Caco-2 (cell line): ENCODE measurements at regions of chr4 and their contacts with region 1.

Region 1: DNA sequence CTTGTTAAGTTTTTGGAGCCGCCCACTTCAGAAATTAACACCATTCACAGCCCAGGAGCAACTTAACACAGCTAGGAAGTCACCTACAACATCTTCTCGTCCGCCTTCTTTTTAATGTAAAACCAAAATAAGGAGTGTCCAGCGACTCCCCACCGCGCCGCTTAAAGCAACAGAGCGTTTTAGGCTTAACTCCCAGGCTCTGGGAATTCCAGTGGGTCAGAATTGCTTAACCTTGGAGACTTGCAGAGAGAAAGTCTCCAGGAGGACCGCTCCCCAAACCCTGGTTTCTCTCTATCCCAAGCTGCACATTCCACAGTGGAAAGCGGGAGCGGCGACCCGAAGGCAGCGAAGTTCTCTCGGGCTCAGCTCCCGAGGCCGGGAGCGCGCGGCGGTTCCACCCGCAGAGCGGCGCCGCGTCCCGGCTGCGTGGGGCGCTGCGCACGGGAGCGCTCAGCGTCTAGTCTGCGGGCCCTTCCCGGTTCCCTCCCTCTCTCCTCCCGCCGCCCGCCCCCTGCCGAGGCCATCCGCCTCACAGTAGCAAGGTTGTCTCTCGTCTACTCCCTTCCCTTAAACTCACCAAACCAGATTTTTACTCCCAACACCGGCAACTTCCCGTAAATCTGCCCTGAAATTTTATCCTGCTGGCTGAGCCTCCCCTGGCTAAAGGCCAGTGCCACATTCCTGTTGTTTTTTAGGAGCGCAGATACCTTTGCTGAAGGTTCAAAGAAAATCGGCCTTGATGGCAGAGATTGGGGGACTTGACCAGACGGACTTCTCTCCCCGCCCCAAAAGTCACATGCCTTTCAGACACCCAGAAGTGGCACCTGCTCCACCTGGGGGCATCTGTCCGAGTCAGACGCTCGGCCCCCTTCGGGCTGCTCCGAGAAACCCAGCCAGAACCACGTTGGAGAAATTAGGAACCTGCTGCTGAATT is at the start of gene RBM47:
- DNase-seq: peak; percentile 81 to 88
- H3K4me3 ChIP-seq: peak within 1 kb of the TSS; percentile 51
- H3K4me3 Mint-ChIP-seq: peak within 1 kb of the TSS; percentile 86
- H3K27ac Mint-ChIP-seq: peak within 1 kb of the TSS; percentile 94
- H3K4me1 ChIP-seq: peaks cover 12% of the 10 kb centered on the region
- H3K4me1 Mint-ChIP-seq: peaks cover 25% of the 10 kb centered on the region
- H3K27me3 ChIP-seq: no peaks in the 10 kb centered on the region
- H3K27me3 Mint-ChIP-seq: no peaks in the 10 kb centered on the region
- CTCF ChIP-seq: no peak
- total RNA-seq, gene RBM47: 59.1 and 62.1 TPM in 2 replicates

Region 2: GRCh38 chr4:40515398-40516293 is 114.0 kb before region 1 on chr4:
- CTCF ChIA-PET with region 1: no interaction called
- POLR2A ChIA-PET with region 1: no interaction called
- intact Hi-C with region 1: loop called (anchors 5 kb)
- DNase-seq: peak; percentile 79 to 91
- H3K4me3 ChIP-seq: peak overlapping the region; percentile 62
- H3K4me3 Mint-ChIP-seq: peak overlapping the region; percentile 85
- H3K27ac Mint-ChIP-seq: peak overlapping the region; percentile 83
- H3K4me1 ChIP-seq: peaks cover 30% of the 10 kb centered on the region
- H3K4me1 Mint-ChIP-seq: peaks cover 27% of the 10 kb centered on the region
- H3K27me3 ChIP-seq: no peaks in the 10 kb centered on the region
- H3K27me3 Mint-ChIP-seq: no peaks in the 10 kb centered on the region
- CTCF ChIP-seq: no peak

Region 3: DNA sequence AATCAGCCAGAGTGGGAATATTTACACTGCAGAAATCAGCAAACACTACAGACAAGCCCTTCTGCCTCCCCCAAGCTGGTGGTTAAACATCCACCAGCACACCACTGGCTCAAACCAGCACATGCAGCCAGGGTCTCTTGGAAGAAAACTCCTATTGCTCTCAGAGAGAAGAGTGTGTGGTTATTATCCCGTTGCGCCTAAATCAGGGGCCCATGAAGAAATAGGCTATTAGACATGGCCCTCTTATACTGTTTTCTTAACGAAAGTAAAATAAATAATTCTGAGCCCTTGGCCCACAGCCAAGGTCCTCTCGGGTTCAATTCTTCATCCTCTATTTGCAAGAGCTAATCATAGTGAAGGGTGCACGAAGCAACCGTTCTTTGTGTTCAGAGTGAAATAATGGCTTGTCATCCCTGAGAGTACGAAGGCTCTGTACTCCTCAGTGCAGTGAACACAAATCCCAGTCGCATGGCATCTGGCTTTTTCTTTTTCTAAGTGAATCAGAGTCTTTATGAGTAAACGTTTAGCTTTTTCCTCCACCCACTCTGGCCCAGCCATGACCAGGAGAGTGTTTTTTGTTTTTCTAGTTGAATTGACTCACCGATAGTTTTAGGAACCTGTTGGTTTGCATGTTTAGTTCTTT is 33.4 kb after region 1 on chr4:
- CTCF ChIA-PET with region 1: interaction called, 6 read pairs
- POLR2A ChIA-PET with region 1: no interaction called
- intact Hi-C with region 1: loop called (anchors 2 kb)
- DNase-seq: peak; percentile 50 to 52
- H3K4me3 ChIP-seq: 0 out of 2 replicates have a peak overlapping the region, but pooled peaks have one; percentile 5
- H3K4me3 Mint-ChIP-seq: peak overlapping the region; percentile 47
- H3K27ac Mint-ChIP-seq: peak overlapping the region; percentile 28
- H3K4me1 ChIP-seq: peaks cover 15% of the 10 kb centered on the region; the same call in 1 of the 2 replicates
- H3K4me1 Mint-ChIP-seq: peaks cover 13% of the 10 kb centered on the region
- H3K27me3 ChIP-seq: no peaks in the 10 kb centered on the region
- H3K27me3 Mint-ChIP-seq: no peaks in the 10 kb centered on the region
- CTCF ChIP-seq: no peak

Region 4: GRCh38 chr4:40672536-40673526 is 43.2 kb after region 1 on chr4:
- CTCF ChIA-PET with region 1: no interaction called
- POLR2A ChIA-PET with region 1: no interaction called
- intact Hi-C with region 1: loop called (anchors 2 kb)
- DNase-seq: peak; percentile 37 to 46
- H3K4me3 ChIP-seq: no peak overlapping the region
- H3K4me3 Mint-ChIP-seq: peak overlapping the region; percentile 52
- H3K27ac Mint-ChIP-seq: peak overlapping the region; percentile 84
- H3K4me1 ChIP-seq: peaks cover 38% of the 10 kb centered on the region
- H3K4me1 Mint-ChIP-seq: peaks cover 34% of the 10 kb centered on the region
- H3K27me3 ChIP-seq: no peaks in the 10 kb centered on the region
- H3K27me3 Mint-ChIP-seq: no peaks in the 10 kb centered on the region
- CTCF ChIP-seq: no peak

Region 5: DNA sequence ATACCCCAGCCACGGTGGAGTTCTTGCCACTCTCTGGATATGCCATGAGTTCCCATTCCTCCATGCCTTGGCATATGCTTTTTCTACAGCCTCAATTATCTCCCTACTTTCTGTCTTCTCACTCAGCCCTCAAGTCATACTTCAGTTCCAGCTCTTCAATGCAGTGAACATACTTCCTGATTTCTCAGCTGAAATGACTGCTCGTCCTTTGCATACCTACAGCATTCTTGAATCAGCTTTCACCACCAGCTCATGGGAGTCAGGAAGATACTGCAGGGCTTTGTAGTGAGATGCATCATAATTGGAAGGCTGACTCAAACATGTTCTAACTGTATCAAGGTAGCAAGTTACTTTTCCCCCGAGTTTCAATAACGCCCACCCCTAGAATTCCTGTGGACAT is 466.3 kb after region 1 on chr4:
- CTCF ChIA-PET with region 1: no interaction called
- POLR2A ChIA-PET with region 1: no interaction called
- intact Hi-C with region 1: no loop called
- DNase-seq: no peak
- H3K4me3 ChIP-seq: no peak overlapping the region
- H3K4me3 Mint-ChIP-seq: no peak overlapping the region
- H3K27ac Mint-ChIP-seq: peak overlapping the region; percentile 7
- H3K4me1 ChIP-seq: no peaks in the 10 kb centered on the region
- H3K4me1 Mint-ChIP-seq: peaks cover 14% of the 10 kb centered on the region
- H3K27me3 ChIP-seq: no peaks in the 10 kb centered on the region
- H3K27me3 Mint-ChIP-seq: no peaks in the 10 kb centered on the region
- CTCF ChIP-seq: no peak